Activated CD8-positive, alpha-beta T cell treated with anti-CD3 and anti-CD28 coated beads for 36 hours (primary cell): ENCODE measurements at regions of chr12 and their contacts with region 1.

Region 1: GRCh38 chr12:66693901-66694675 is 15.2 kb upstream of the GRIP1 start:
- DNase-seq: peak; percentile 34
- ATAC-seq: peak; percentile 81
- H3K4me3 Mint-ChIP-seq: no peak overlapping the region
- H3K27ac Mint-ChIP-seq: no peak overlapping the region
- H3K4me1 Mint-ChIP-seq: peaks cover 16% of the 10 kb centered on the region
- H3K27me3 Mint-ChIP-seq: no peaks in the 10 kb centered on the region
- CTCF ChIP-seq: peak; percentile 66

Region 2: GRCh38 chr12:66269757-66270383 is 424.2 kb before region 1 on chr12:
- CTCF ChIA-PET with region 1: interaction called, 4 read pairs
- POLR2A ChIA-PET with region 1: no interaction called
- intact Hi-C with region 1: loop called (anchors 10 kb)
- DNase-seq: peak; percentile 29
- ATAC-seq: peak; percentile 65
- H3K4me3 Mint-ChIP-seq: no peak overlapping the region
- H3K27ac Mint-ChIP-seq: no peak overlapping the region
- H3K4me1 Mint-ChIP-seq: no peaks in the 10 kb centered on the region
- H3K27me3 Mint-ChIP-seq: peaks cover 3% of the 10 kb centered on the region
- CTCF ChIP-seq: peak; percentile 58

Region 3: DNA sequence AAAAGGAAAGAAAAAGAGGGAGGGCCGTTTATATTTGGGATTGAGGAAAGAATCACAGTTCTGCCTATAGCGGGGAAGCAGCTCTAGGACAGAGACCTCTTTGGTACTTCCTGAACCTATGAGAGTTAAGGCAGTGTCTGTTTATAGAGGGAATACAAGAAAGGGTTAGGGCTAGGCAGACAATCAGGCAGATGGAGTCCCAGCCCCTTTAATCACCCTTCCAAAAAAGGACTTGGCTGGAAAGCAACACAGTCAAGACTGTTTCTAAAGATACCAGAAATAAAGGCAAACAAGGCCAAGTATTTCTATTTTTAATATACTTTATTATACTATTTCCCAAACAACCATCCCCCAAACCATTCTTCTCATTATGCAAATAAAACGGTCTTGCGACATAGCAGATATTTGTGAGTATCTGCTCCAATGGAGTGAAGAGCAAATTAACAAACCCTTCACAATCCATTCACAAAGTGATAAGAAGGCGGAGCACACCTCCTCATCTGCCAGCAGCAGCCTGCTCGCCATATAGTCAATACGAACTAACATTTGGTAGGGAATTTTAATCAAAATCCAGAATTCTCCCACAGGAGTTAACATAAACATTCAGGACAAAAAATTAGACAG is 14.5 kb before region 1 on chr12:
- CTCF ChIA-PET with region 1: interaction called, 42 read pairs
- POLR2A ChIA-PET with region 1: interaction called, 3 read pairs
- intact Hi-C with region 1: no loop called
- DNase-seq: no peak
- ATAC-seq: no peak
- H3K4me3 Mint-ChIP-seq: no peak overlapping the region
- H3K27ac Mint-ChIP-seq: no peak overlapping the region
- H3K4me1 Mint-ChIP-seq: no peaks in the 10 kb centered on the region
- H3K27me3 Mint-ChIP-seq: peaks cover 10% of the 10 kb centered on the region
- CTCF ChIP-seq: no peak

Region 4: DNA sequence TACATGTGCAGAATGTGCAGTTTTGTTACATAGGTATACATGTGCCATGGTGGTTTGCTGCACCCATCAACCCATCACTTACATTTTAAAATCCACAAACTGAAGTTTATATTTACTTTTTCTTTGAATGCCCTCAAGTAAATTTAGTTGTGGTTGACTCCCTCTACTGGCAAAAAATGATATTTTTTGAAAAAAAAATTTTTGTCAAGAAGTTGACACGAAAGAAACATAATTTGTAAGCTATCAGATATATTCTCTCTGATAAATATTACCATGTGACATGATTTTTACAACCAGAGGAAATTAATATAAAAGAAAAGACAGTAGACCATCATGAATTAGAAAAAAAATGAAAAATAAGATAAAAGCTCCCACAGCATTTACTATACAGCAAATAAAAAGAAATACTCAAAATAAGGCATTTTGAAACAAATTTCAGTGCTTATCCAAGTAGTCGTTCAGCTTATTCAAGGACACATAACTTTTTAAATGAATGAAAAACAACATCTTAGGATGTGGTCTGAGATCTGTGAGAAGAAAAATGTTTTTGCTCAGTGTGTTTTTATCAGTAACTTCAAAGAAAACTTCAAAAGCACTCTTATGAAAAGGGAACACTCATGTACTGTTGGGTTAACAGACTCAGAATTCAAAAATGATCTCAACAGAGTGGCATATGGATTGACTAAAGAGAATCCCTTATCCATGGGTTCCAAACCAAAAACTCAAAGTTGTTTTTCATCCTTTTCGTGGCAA is 14.8 kb after region 1 on chr12:
- CTCF ChIA-PET with region 1: interaction called, 19 read pairs
- POLR2A ChIA-PET with region 1: interaction called, 3 read pairs
- intact Hi-C with region 1: no loop called
- DNase-seq: no peak
- ATAC-seq: peak; percentile 30
- H3K4me3 Mint-ChIP-seq: peak overlapping the region; percentile 7
- H3K27ac Mint-ChIP-seq: peak overlapping the region; percentile 47
- H3K4me1 Mint-ChIP-seq: peaks cover 26% of the 10 kb centered on the region
- H3K27me3 Mint-ChIP-seq: no peaks in the 10 kb centered on the region
- CTCF ChIP-seq: peak; percentile 65

Region 5: GRCh38 chr12:66823857-66824570 is 129.9 kb after region 1 on chr12:
- CTCF ChIA-PET with region 1: no interaction called
- POLR2A ChIA-PET with region 1: no interaction called
- intact Hi-C with region 1: no loop called
- DNase-seq: no peak
- ATAC-seq: no peak
- H3K4me3 Mint-ChIP-seq: no peak overlapping the region
- H3K27ac Mint-ChIP-seq: no peak overlapping the region
- H3K4me1 Mint-ChIP-seq: peaks cover 7% of the 10 kb centered on the region
- H3K27me3 Mint-ChIP-seq: no peaks in the 10 kb centered on the region
- CTCF ChIP-seq: no peak

Region 6: DNA sequence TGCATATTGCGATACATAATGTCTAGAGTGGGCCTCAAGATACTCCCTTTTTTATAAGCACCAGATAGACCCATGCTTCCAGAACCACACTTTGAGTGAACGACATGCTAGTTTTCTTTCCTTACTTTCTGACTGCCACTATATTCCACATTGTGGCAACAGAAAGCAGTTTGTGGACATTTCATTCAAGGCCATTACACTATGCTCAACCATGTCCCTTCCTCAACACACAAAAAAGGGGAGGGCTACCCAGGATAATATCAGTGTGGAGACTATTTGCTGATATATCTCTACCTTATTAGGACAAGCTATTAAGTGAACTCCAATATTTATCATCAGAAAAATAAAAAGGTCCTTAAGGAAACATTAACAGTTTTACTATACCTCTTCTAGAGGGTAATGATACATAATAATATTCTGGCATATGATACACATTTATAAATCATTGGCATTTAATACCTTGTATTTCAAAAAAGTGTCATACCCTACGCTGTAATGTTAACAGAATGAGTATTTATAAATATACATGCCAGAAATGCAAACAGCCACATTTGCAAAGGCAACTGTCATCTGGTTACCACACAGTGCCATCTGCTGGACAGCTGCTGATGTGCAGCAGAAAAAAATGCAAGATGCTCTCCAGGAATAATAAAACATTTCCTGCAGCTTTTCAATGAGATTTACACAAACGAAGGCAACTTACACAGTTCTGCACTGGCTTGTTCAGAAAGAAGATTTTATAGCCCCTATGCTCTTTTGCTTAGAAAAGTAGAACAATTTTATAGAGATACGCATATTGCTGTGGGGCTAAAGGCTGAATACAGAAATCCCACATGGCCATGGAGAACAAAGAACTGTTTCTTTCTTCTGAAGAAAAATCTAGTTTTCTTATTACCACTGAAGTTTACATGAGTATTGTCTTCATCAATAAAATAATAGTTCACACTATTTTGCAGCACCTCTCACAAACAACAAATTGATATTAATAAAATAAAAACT is 167.0 kb after region 1 on chr12:
- CTCF ChIA-PET with region 1: interaction called, 26 read pairs
- POLR2A ChIA-PET with region 1: no interaction called
- intact Hi-C with region 1: no loop called
- DNase-seq: peak; percentile 76
- ATAC-seq: no peak
- H3K4me3 Mint-ChIP-seq: no peak overlapping the region
- H3K27ac Mint-ChIP-seq: no peak overlapping the region
- H3K4me1 Mint-ChIP-seq: peaks cover 17% of the 10 kb centered on the region
- H3K27me3 Mint-ChIP-seq: peaks cover 4% of the 10 kb centered on the region
- CTCF ChIP-seq: peak; percentile 97